ENCODE measurements at regions of chr2 and their contacts with region 1.

Region 1: GRCh38 chr2:110812726-110813645 is 80.6 kb downstream of the ACOXL start:
- DNase-seq: peak in 1 of 2 donors; percentile 52
- ATAC-seq: peak in 1 of 2 donors; percentile 9
- H3K4me3 ChIP-seq: no peak overlapping the region
- H3K27ac ChIP-seq: peak overlapping the region; percentile 81 to 97 (median 90)
- H3K4me1 ChIP-seq: peaks cover 44 to 61% of the 10 kb centered on the region in 2 donors
- H3K27me3 ChIP-seq: no peaks in the 10 kb centered on the region
- CTCF ChIP-seq: no peak
- POLR2A ChIP-seq: no peak

Region 2: DNA sequence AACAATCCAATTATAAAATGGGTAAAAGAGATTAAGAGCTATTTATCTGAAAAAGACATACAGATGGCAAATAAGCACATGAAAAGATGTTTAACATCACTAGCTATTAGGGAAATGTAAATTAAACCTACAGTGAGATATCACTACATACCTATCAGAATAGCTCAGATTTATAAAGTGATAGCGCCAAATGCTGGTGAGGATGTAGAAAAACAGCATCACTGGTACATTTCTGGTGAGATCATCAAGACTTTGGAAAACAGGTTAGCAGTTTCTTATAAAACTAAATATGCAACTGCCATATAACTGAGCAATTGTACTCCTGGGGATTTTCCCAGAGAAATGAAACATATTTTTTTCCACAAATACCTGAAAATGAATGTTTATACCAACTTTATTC is 19.8 kb after region 1 on chr2:
- in situ Hi-C with region 1: no loop called
- intact Hi-C with region 1: loop called (anchors 2 kb)
- DNase-seq: no peak
- ATAC-seq: no peak
- H3K4me3 ChIP-seq: no peak overlapping the region
- H3K27ac ChIP-seq: no peak overlapping the region
- H3K4me1 ChIP-seq: no peaks in the 10 kb centered on the region
- H3K27me3 ChIP-seq: peaks cover 0 to 4% (median 0%) of the 10 kb centered on the region in 3 donors
- CTCF ChIP-seq: peak in 1 of 5 experiments; percentile 26
- POLR2A ChIP-seq: no peak

Measured in gastrocnemius medialis (tissue), 4 donors.